ENCODE measurements at regions of chr18 and their contacts with region 1.

Region 1: GRCh38 chr18:23053776-23054457 is 81.4 kb upstream of the CABLES1 start:
- DNase-seq: peak in 1 of 3 donors; percentile 61
- ATAC-seq: peak; percentile 63 to 77
- H3K4me3 ChIP-seq: no peak overlapping the region
- H3K27ac ChIP-seq: no peak overlapping the region
- H3K4me1 ChIP-seq: peaks cover 5% of the 10 kb centered on the region
- H3K27me3 ChIP-seq: no peaks in the 10 kb centered on the region

Region 2: DNA sequence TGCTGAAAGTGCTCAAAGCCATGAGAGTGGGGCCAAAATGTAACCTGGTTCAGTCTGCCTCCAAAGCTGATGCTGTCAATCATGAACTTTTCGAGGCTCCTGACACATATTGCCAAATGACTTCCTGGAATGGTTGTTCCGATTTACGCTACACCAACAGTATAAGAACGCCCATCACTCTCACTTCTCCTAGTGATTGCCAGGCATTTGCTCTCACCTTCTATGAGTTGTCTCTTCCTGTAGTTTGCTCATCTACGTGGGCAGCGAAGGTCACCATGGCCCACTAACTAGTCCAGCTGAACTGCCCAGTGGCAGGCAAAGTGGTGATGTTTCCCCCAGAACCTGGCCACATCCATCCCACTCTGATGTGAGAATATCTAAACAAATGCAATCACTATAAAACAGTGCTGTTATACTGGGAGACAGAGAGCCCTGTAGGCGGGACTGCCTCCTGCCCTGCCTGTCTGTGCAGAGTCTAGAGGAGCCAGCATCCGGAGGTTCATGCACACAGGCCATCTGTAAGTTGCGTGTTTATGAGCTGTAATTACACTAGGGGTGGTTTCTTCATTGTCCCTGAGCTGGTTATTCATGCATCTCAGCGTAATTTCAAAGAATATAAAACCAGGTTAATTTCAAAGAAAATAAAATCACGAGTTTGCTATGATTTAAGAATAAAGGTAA is 72.6 kb after region 1 on chr18:
- intact Hi-C with region 1: loop called in 1 of 4 experiments (anchors 10 kb)
- DNase-seq: no peak
- ATAC-seq: peak; percentile 35 to 56
- H3K4me3 ChIP-seq: no peak overlapping the region
- H3K27ac ChIP-seq: no peak overlapping the region
- H3K4me1 ChIP-seq: peaks cover 2% of the 10 kb centered on the region
- H3K27me3 ChIP-seq: no peaks in the 10 kb centered on the region

Measured in right cardiac atrium (tissue), 5 donors.